Mammary epithelial cell (primary cell): ENCODE measurements at regions of chr19 and their contacts with region 1.

Region 1: DNA sequence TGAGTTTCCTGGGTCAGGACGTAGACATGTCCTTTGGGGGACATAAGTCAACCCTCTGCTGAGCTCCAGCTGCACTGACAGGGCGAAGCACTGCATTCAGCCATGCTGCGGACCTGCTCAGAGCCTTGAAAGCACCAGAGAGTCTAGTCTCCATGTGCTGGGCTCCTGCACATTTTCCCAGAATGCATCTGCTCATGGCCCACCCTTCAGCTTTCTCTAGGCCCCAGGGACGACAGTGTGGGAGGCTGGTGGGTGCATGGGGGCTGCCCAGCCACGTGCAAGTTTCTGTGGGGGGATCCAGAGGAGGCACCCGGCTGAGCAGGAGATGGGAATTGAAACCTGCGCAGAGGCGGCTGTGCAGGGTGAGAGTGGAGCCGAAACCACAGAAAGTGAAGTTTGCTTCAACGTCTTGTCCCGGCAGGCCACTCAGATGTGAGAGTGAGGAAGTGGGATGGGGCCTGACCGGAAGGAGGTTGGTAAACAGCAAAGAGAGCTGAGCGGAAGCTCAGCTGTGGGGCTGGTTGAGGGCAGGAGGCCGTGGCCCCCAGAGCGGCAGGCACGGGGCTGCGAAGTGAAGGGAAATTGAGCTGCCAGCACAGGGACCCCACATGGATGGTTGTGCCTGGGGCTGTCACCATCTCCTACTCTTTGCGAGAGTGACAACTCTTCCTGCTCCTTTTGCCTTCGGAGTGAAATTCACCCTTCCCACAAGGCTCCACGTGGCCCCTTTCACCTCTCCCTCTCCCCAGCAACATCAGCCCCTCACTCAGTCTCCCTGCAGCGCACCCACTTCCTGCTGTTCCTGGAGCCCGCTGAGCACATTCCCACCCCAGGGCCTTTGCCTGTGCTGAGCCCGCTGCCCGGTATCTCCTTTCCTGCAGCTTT is 11.8 kb downstream of the PGLS start:
- DNase-seq: no peak
- H3K4me3 ChIP-seq: no peak overlapping the region
- H3K27ac ChIP-seq: no peak overlapping the region
- H3K4me1 ChIP-seq: no peaks in the 10 kb centered on the region
- H3K27me3 ChIP-seq: no peaks in the 10 kb centered on the region
- CTCF ChIP-seq: no peak

Region 2: GRCh38 chr19:17305517-17306284 is 217.5 kb before region 1 on chr19 and contains the start of gene MRPL34:
- CTCF ChIA-PET with region 1: no interaction called
- dilution Hi-C with region 1: loop called (anchors 5 kb)
- in situ Hi-C with region 1: no loop called
- intact Hi-C with region 1: no loop called
- DNase-seq: peak; percentile 100
- H3K4me3 ChIP-seq: peak within 1 kb of the TSS; percentile 57 to 90 (median 80)
- H3K27ac ChIP-seq: peak within 1 kb of the TSS; percentile 56
- H3K4me1 ChIP-seq: peaks cover 43% of the 10 kb centered on the region
- H3K27me3 ChIP-seq: no peaks in the 10 kb centered on the region
- CTCF ChIP-seq: peak; percentile 61 to 91
- total RNA-seq, gene MRPL34: 36.7 to 76.3 TPM

Region 3: GRCh38 chr19:17448131-17448967 is 74.9 kb before region 1 on chr19 and contains the start of gene TMEM221:
- CTCF ChIA-PET with region 1: no interaction called
- dilution Hi-C with region 1: loop called (anchors 5 kb)
- in situ Hi-C with region 1: no loop called
- intact Hi-C with region 1: no loop called
- DNase-seq: no peak
- H3K4me3 ChIP-seq: peak within 1 kb of the TSS; percentile 37 to 46 (median 43)
- H3K27ac ChIP-seq: no peak within 1 kb of the TSS
- H3K4me1 ChIP-seq: peaks cover 8% of the 10 kb centered on the region
- H3K27me3 ChIP-seq: no peaks in the 10 kb centered on the region
- CTCF ChIP-seq: peak in 1 of 2 donors; percentile 58
- total RNA-seq, gene TMEM221: 0.17 to 1.4 TPM

Region 4: GRCh38 chr19:17599780-17600179 is 76.5 kb after region 1 on chr19:
- CTCF ChIA-PET with region 1: no interaction called
- dilution Hi-C with region 1: loop called (anchors 5 kb)
- in situ Hi-C with region 1: no loop called
- intact Hi-C with region 1: no loop called
- DNase-seq: no peak
- H3K4me3 ChIP-seq: no peak overlapping the region
- H3K27ac ChIP-seq: no peak overlapping the region
- H3K4me1 ChIP-seq: no peaks in the 10 kb centered on the region
- H3K27me3 ChIP-seq: peaks cover 4% of the 10 kb centered on the region
- CTCF ChIP-seq: no peak

Region 5: DNA sequence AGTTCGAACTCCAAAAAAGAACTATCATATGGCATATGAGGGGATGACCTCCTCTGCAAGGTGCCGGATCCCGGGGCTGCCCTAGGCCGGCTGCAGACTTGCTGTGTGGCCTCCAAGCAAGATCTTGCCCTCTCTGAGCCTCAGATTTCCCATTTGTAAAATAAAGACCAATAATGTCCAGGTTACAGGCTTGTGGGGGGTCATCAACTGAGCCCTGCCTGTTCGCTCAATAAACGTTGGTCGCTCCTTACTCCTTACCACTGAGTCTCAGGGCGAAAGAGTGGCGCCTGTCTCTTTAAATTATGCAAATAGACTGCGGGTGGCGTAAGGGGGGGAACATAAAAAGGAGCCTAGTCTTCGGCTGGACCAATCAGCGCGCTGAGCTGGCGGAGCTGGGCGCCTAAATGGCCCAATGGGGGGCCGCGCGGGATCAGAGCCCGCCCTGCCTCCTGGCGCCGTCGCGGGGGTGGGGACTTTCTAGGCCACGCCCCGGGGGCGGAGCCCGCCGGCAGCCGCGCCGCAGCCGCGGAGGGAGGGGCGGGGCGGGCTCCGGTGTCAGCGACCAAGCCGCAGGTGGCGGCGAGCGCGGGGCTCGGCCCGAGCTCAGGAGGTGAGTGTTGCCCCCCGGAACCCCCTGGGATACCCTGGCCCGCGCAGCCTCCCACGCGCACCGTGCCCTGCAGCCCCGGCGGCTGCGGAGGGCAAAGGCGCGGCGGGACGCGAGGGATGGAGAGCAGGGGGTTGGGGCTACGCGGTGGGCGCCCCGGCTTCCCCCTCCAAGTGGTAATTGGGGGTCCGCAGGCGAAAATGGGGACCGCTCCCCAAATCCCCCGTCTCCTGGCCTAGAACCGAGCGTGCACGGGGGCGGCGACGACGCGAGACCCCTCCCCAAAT is 224.2 kb after region 1 on chr19:
- CTCF ChIA-PET with region 1: no interaction called
- dilution Hi-C with region 1: loop called (anchors 5 kb)
- in situ Hi-C with region 1: no loop called
- intact Hi-C with region 1: no loop called
- DNase-seq: peak; percentile 87
- H3K4me3 ChIP-seq: peak overlapping the region; percentile 33 to 42 (median 37)
- H3K27ac ChIP-seq: no peak overlapping the region
- H3K4me1 ChIP-seq: no peaks in the 10 kb centered on the region
- H3K27me3 ChIP-seq: no peaks in the 10 kb centered on the region
- CTCF ChIP-seq: no peak